Activated T-helper 1 cell treated with anti-CD3 and anti-CD28 coated beads, Interleukin-12 subunit alpha, Interleukin-12 subunit beta, Interleukin-2, Interleukin-4 antibody, amounts not matched to agents 30 ng/mL and 10 ng/mL and 1 ng/mL, durations not matched to agents 14 hours and 24 hours and 36 hours (primary cell): ENCODE measurements at regions of chr7 and their contacts with region 1.

Region 1: GRCh38 chr7:7830122-7830878 is 111.9 kb upstream of the RPA3 start:
- DNase-seq: no peak
- H3K4me3 Mint-ChIP-seq: no peak overlapping the region
- H3K27ac Mint-ChIP-seq: peak overlapping the region; percentile 61
- H3K4me1 Mint-ChIP-seq: peaks cover 7% of the 10 kb centered on the region
- H3K27me3 Mint-ChIP-seq: peaks cover 2% of the 10 kb centered on the region

Region 2: GRCh38 chr7:7662527-7662926 is 167.8 kb before region 1 on chr7:
- intact Hi-C with region 1: no loop called
- DNase-seq: no peak
- H3K4me3 Mint-ChIP-seq: no peak overlapping the region
- H3K27ac Mint-ChIP-seq: no peak overlapping the region
- H3K4me1 Mint-ChIP-seq: no peaks in the 10 kb centered on the region
- H3K27me3 Mint-ChIP-seq: peaks cover 5% of the 10 kb centered on the region

Region 3: GRCh38 chr7:7816084-7816483 is 14.2 kb before region 1 on chr7:
- intact Hi-C with region 1: loop called (anchors 1 kb)
- DNase-seq: peak; percentile 7
- H3K4me3 Mint-ChIP-seq: peak overlapping the region; percentile 56
- H3K27ac Mint-ChIP-seq: peak overlapping the region; percentile 27
- H3K4me1 Mint-ChIP-seq: peaks cover 41% of the 10 kb centered on the region
- H3K27me3 Mint-ChIP-seq: peaks cover 2% of the 10 kb centered on the region